Activated CD4-positive, alpha-beta memory T cell treated with anti-CD3 and anti-CD28 coated beads, Interleukin-2, amount 10 ng/mL, durations not matched to agents 7 days and 5 days (primary cell): ENCODE measurements at regions of chr1 and their contacts with region 1.

Region 1: GRCh38 chr1:149899460-149900293 is at the start of gene BOLA1:
- DNase-seq: peak; percentile 86
- H3K4me3 Mint-ChIP-seq: peak within 1 kb of the TSS; percentile 83
- H3K27ac Mint-ChIP-seq: peak within 1 kb of the TSS; percentile 87
- H3K4me1 Mint-ChIP-seq: peaks cover 29% of the 10 kb centered on the region
- H3K27me3 Mint-ChIP-seq: no peaks in the 10 kb centered on the region
- total RNA-seq, gene BOLA1: 24.9 to 27.2 TPM

Region 2: DNA sequence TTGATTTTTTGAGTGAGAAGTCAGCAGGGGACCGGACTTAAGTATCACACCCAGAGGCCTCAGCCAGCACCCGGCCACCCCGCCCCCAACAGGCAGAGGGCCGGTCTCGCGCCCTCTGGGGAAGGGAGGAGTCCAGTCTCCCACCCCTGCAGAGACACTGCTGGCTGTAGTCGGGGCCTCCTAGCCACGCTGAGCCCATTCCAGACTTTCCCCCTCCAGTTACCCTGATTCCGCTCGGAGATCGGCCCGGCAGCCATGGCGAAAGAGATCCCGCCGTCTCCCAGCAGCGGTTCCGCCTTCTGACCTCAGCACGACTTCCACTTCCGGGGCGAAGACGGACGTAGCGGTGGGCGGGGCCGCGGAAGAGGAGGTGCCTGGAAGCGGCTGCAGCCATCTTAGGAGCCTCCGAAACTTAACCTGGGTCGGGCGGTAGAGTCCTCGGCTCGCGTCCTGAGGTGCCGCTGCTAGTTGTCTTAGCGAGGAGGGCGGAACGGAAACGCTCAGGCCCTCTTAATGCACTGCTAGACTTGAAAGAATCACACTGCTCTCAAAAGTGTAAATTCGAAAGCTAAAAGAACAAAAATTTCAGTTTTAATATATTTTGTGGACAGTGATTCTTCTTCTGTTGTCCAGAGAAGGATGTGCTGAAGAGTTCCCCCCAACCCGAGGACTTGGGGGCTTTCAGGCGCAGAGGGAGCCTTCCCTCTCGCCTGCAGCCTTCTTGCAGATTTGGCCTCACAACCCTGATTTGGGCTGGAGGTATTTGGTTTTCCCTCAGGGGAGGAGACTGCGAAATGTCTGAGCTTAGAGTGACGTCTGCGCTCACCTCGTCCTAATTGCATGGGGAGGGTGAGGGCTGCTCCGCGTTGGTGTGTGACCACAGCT is 28.1 kb after region 1 on chr1 and contains the start of gene SF3B4:
- CTCF ChIA-PET with region 1: interaction called, 5 read pairs
- POLR2A ChIA-PET with region 1: interaction called, 11 read pairs
- DNase-seq: peak; percentile 96
- H3K4me3 Mint-ChIP-seq: peak within 1 kb of the TSS; percentile 97
- H3K27ac Mint-ChIP-seq: peak within 1 kb of the TSS; percentile 95
- H3K4me1 Mint-ChIP-seq: peaks cover 74% of the 10 kb centered on the region
- H3K27me3 Mint-ChIP-seq: no peaks in the 10 kb centered on the region
- total RNA-seq, gene SF3B4: 82.3 to 84.3 TPM